Naive thymus-derived CD8-positive, alpha-beta T cell (primary cell): ENCODE measurements at regions of chr19 and their contacts with region 1.

Region 1: DNA sequence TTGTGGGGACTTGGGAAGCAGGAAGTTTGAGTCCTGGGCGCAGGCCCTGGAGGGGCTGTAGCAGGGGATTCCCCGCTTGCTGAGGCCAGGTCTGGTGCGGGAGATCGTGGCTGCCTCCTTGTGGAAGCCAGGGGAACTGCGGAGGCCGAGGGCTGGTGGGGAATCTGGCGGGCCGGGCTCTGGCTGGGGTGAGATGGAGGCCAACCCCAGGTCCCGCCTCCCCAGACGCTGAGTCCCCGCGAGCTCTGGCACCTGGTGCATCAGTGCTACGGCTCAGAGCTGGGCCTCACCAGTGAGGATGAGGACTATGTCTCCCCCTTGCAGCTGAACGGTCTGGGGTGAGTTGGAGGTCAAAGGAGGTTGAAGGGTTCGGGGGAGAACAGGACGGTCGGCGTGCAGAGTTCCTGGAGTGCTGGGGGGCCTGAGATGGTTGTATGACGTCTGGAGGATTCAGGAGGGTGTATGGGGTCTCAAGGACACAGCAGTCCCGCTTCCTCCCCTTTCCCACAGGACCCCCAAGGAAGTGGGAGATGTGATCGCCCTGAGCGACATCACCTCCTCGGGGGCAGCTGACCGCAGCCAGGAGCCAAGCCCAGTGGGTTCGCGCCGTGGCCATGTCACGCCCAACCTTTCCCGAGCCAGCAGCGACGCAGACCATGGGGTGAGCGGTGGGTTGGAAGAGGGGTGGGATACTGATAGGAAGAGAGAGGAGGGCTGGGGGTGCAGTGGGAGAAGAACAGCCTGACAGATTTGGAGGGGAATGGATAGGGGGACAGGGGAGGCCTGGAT is 13.1 kb downstream of the GRAMD1A start:
- DNase-seq: peak; percentile 78 to 90 (median 87)
- ATAC-seq: peak; percentile 74 to 83
- H3K4me3 Mint-ChIP-seq: peak overlapping the region; percentile 75 to 97 (median 86)
- H3K27ac Mint-ChIP-seq: peak overlapping the region; percentile 88 to 99 (median 98)
- H3K4me1 Mint-ChIP-seq: peaks cover 38 to 81% (median 76%) of the 10 kb centered on the region in 4 donors
- H3K27me3 Mint-ChIP-seq: no peaks in the 10 kb centered on the region

Region 2: DNA sequence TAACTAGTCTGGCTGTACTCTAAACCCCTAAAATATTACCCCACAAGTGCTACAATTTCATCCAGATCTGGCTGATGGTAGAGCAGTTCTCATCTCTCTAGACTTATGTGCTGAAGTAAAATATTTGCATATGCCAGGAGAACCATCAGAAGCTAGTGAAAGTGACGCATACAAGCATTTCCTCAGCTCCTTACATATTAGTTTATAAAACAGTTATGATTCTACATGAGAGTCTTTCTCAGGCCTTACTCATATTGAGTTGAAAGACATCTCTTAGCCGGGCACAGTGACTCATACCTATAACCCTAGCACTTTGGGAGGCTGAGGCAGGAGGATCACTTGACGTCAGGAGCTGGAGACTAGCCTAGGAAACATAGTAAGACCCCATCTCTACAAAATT is 102.5 kb before region 1 on chr19:
- POLR2A ChIA-PET with region 1: no interaction called
- DNase-seq: no peak
- ATAC-seq: no peak
- H3K4me3 Mint-ChIP-seq: no peak overlapping the region
- H3K27ac Mint-ChIP-seq: peak overlapping the region in 1 of 10 donors; percentile 24
- H3K4me1 Mint-ChIP-seq: peaks cover under 1 to 9% (median 2%) of the 10 kb centered on the region in 4 donors
- H3K27me3 Mint-ChIP-seq: peaks cover 23 to 38% (median 29%) of the 10 kb centered on the region in 5 donors

Region 3: DNA sequence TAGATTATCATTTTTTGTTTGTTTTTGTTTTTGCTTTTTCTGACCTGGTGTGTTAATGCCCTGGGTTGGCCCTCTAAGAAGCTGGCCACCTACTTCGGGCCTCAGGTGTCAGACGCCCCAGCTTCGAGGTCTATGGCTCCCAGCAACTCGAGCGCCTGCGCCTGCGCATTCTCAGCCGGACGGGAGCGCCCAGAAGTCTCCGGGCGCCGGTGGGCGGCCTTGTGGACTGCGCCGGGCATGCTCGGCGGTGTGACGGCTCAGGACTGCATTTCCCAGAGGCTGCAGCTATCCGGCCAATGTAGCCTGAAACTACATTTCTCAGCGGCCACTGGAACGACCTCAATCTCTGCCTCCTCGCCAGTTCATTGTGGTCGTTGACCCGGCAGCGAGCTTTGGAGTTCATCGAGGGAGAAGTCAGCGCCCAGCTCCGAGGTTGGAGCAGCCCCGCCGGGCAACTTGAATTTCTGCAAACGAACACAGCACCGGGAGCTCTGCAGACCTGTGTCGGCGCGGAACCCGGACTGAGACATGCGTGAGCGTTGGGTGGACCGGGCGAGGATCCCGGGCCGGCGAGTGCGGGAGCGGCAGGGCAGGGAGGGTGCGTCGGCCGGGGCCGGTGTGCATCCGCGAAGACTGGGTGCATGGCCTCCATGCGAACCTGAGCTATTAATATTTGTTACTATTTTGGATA is 86.4 kb before region 1 on chr19 and contains the start of gene ZNF30:
- POLR2A ChIA-PET with region 1: interaction called, 17 read pairs
- DNase-seq: peak; percentile 52 to 89 (median 77)
- ATAC-seq: peak; percentile 99
- H3K4me3 Mint-ChIP-seq: peak within 1 kb of the TSS; percentile 89 to 94 (median 92)
- H3K27ac Mint-ChIP-seq: peak within 1 kb of the TSS; percentile 52 to 90 (median 81)
- H3K4me1 Mint-ChIP-seq: peaks cover 4 to 36% (median 21%) of the 10 kb centered on the region in 4 donors
- H3K27me3 Mint-ChIP-seq: peaks cover 0 to 2% (median 0%) of the 10 kb centered on the region in 5 donors
- polyA plus RNA-seq, gene ZNF30: 4.9 to 8.0 (median 5.8) TPM

Region 4: GRCh38 chr19:35030257-35031071 is 17.2 kb after region 1 on chr19 and contains the start of gene SCN1B:
- POLR2A ChIA-PET with region 1: interaction called, 98 read pairs
- DNase-seq: peak in 8 of 10 donors; percentile 20 to 49 (median 38)
- ATAC-seq: peak; percentile 71 to 85
- H3K4me3 Mint-ChIP-seq: peak within 1 kb of the TSS; percentile 58 to 92 (median 83)
- H3K27ac Mint-ChIP-seq: peak within 1 kb of the TSS in 7 of 10 donors; percentile 15 to 83 (median 40)
- H3K4me1 Mint-ChIP-seq: peaks cover 9 to 15% (median 13%) of the 10 kb centered on the region in 4 donors
- H3K27me3 Mint-ChIP-seq: peaks cover 3 to 13% (median 7%) of the 10 kb centered on the region in 5 donors
- polyA plus RNA-seq, gene SCN1B: 0.27 to 0.28 TPM in 2 of 3 donors, not detected in the other

Region 5: DNA sequence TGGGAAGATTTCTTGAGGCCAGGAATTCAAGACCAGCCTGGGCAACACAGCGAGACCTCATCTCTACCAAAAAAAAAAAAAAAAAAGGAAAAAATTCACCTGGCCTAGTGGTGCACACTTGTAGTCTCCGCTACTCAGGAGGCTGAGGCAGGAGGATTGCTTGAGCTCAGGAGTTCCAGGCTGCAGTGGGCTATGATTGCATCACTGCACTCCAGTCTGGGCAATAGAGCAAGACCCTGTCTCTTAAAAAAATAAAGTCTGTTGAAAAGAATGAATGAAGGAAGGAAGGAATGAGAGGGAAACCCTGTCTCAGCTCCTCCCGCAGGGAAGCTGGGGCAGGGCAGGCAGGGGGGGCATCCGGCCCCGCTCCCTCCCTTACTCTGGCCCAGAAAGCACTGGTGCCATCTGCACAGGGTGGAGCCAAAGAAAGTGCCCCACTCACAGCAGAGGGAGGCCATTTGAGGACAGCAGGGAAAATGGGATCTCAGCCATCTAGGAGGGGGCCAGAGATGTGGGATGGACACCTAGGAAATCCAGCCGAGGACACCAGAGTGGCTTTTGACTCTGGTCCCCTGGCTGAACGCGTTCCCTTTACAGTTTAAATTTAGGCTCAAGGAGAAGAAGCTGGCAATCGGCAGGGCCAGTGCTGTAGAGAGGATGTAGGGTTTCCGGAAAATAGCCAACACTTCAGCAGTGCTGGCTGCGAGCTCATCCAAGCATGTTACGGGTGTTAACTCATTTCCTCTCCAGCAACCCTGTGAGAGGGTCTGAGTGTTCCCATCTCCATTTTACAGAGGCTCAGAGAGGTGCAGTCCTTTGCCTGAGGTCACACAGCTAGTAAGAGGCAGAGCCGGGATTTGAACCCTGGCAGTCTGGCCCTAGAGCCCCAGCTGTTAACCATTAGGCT is 24.7 kb after region 1 on chr19:
- POLR2A ChIA-PET with region 1: interaction called, 11 read pairs
- DNase-seq: no peak
- ATAC-seq: no peak
- H3K4me3 Mint-ChIP-seq: peak overlapping the region in 1 of 10 donors; percentile 50
- H3K27ac Mint-ChIP-seq: peak overlapping the region in 4 of 10 donors; percentile 19 to 72 (median 28)
- H3K4me1 Mint-ChIP-seq: peaks cover 18 to 33% (median 32%) of the 10 kb centered on the region in 4 donors
- H3K27me3 Mint-ChIP-seq: peaks cover 0 to 2% (median 0%) of the 10 kb centered on the region in 5 donors

Region 6: DNA sequence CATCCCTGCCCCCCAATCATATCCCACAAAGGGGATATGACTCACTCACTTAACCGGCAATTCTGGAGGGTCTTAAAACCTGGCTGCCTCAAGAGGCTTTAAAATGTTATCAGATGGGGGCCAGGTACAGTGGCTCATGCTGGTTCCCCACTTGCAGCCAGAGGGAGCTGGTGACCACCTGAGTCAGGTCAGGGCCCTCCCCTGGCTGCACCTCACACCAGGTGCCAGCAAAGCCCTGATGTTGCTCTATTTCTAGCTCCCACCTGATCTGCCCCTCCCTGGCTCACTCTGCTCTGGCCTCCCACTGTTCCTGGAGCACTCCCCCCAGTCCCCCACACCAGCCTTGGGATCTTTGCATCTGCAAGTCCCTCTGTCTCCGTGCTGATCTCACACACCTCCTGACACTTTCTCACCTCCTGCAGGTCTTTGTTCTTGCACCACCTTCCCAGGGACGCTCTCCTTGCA is 42.5 kb after region 1 on chr19:
- POLR2A ChIA-PET with region 1: no interaction called
- DNase-seq: peak in 2 of 10 donors; percentile 11 to 20
- ATAC-seq: peak; percentile 63 to 78
- H3K4me3 Mint-ChIP-seq: no peak overlapping the region
- H3K27ac Mint-ChIP-seq: no peak overlapping the region
- H3K4me1 Mint-ChIP-seq: no peaks in the 10 kb centered on the region
- H3K27me3 Mint-ChIP-seq: peaks cover 0 to 2% (median 0%) of the 10 kb centered on the region in 5 donors

Region 7: GRCh38 chr19:35066691-35067563 is 53.7 kb after region 1 on chr19:
- POLR2A ChIA-PET with region 1: no interaction called
- DNase-seq: peak; percentile 74 to 94 (median 88)
- ATAC-seq: peak; percentile 96 to 99
- H3K4me3 Mint-ChIP-seq: no peak overlapping the region
- H3K27ac Mint-ChIP-seq: peak overlapping the region in 4 of 10 donors; percentile 15 to 83 (median 69)
- H3K4me1 Mint-ChIP-seq: peaks cover 0 to 6% (median 5%) of the 10 kb centered on the region in 4 donors
- H3K27me3 Mint-ChIP-seq: peaks cover 0 to 2% (median 0%) of the 10 kb centered on the region in 5 donors

Region 8: DNA sequence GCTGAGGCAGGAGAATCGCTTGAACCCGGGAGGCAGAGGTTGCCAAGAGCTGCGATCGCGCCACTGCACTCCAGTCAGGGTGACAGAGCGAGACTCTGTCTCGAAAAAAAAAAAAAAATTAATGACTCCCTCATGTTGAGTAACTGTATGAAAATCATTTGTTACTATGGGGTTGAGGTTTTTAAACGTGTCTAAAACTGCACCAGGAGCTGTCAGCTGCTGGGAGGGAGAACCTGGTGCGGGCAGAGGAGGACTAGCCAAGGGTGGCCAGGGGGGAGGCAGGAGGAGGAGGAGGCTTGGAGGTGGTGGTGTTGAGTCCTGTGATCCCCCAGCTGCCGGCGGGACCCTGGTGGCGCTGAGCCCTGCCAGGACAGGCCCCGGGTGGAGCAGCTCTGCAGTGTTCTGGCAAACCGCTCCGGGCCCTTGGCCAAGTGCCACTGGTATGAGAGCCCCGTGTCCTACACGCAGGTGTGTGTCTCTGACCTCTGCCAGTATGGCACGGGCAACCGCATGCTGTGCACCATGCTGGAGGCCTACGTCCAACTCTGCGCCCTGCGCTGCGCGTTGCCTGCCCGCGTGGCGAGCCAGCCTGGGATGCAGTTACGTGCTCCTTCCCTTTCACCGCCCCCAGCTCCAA is 85.3 kb after region 1 on chr19:
- POLR2A ChIA-PET with region 1: no interaction called
- DNase-seq: peak in 1 of 10 donors; percentile 51
- ATAC-seq: no peak
- H3K4me3 Mint-ChIP-seq: no peak overlapping the region
- H3K27ac Mint-ChIP-seq: no peak overlapping the region
- H3K4me1 Mint-ChIP-seq: no peaks in the 10 kb centered on the region
- H3K27me3 Mint-ChIP-seq: peaks cover 0 to 3% (median 0%) of the 10 kb centered on the region in 5 donors